K562 (cell line): ENCODE measurements at regions of chr7 and their contacts with region 1.

Region 1: GRCh38 chr7:130205084-130205947 is at the start of gene TMEM209:
- DNase-seq: peak; percentile 99 to 100 (median 100)
- ATAC-seq: peak; percentile 85
- H3K4me3 ChIP-seq: peak within 1 kb of the TSS; percentile 60
- H3K27ac ChIP-seq: peak within 1 kb of the TSS; percentile 95
- H3K4me1 ChIP-seq: peaks cover 24 to 49% of the 10 kb centered on the region in 2 experiments
- H3K27me3 ChIP-seq: no peaks in the 10 kb centered on the region
- CTCF ChIP-seq: peak in 1 of 3 experiments; percentile 53; a peak in 2 of 6 replicates
- EP300 ChIP-seq: peak; percentile 67
- POLR2A ChIP-seq: peak; percentile 99
- RAD21 ChIP-seq: no peak; a peak in 1 of 4 replicates
- polyA plus RNA-seq, gene TMEM209: 74.6 to 82.1 TPM

Region 2: GRCh38 chr7:130047821-130048220 is 157.5 kb before region 1 on chr7:
- CTCF ChIA-PET with region 1: no interaction called
- POLR2A ChIA-PET with region 1: no interaction called
- in situ Hi-C with region 1: no loop called
- intact Hi-C with region 1: no loop called
- DNase-seq: no peak
- ATAC-seq: no peak
- H3K4me3 ChIP-seq: no peak overlapping the region
- H3K27ac ChIP-seq: no peak overlapping the region
- H3K4me1 ChIP-seq: peaks cover 3 to 11% of the 10 kb centered on the region in 2 experiments; a peak in 3 of 5 replicates
- H3K27me3 ChIP-seq: no peaks in the 10 kb centered on the region
- CTCF ChIP-seq: no peak
- EP300 ChIP-seq: no peak
- POLR2A ChIP-seq: no peak
- RAD21 ChIP-seq: no peak

Region 3: DNA sequence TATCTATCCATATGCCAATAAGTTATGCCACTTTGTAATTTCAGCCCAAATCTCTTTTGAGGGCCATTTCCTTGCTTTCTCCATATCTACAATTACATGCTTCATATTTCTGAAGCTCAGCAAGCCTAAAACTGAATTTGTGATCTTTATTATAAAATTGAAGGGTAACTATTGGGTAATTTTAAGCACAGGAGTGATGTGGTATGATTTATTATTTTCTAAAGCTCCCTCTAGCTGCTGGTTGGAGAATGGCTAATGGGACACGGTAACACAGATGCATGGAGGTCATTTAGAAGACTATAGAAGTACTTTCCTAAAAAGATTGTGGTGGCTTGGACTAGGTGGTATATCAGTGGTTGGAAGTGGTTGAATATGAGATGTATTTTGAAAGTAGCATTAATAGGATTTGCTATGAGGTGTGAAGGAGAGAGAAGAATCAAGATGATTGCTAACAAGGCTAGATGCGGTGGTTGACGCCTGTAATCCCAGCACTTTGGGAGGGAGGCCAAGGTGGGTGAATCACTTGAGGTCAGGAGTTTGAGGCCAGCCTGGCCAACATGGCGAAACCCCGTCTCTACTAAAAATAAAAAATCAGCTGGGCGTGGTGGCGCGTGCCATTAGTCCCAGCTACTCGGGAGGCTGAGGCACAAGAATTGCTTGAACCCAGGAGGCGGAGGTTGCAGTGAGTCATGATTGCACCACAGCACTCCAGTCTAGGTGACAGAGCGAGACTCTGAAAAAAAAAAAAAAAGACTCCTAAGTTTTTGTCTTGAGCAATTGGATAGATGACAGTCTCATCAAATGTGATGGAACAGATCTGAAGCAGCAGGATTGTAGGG is 121.1 kb before region 1 on chr7:
- CTCF ChIA-PET with region 1: no interaction called
- POLR2A ChIA-PET with region 1: interaction called, 3 read pairs
- in situ Hi-C with region 1: no loop called
- intact Hi-C with region 1: loop called (anchors 5 kb)
- DNase-seq: peak in 3 of 4 experiments; percentile 41 to 50 (median 44)
- ATAC-seq: peak; percentile 81
- H3K4me3 ChIP-seq: no peak overlapping the region
- H3K27ac ChIP-seq: no peak overlapping the region
- H3K4me1 ChIP-seq: peaks cover 0 to 6% of the 10 kb centered on the region in 2 experiments; a peak in 2 of 5 replicates
- H3K27me3 ChIP-seq: no peaks in the 10 kb centered on the region
- CTCF ChIP-seq: peak; percentile 40 to 72 (median 70); a peak in 5 of 6 replicates
- EP300 ChIP-seq: no peak
- POLR2A ChIP-seq: no peak
- RAD21 ChIP-seq: no peak; a peak in 1 of 4 replicates

Region 4: DNA sequence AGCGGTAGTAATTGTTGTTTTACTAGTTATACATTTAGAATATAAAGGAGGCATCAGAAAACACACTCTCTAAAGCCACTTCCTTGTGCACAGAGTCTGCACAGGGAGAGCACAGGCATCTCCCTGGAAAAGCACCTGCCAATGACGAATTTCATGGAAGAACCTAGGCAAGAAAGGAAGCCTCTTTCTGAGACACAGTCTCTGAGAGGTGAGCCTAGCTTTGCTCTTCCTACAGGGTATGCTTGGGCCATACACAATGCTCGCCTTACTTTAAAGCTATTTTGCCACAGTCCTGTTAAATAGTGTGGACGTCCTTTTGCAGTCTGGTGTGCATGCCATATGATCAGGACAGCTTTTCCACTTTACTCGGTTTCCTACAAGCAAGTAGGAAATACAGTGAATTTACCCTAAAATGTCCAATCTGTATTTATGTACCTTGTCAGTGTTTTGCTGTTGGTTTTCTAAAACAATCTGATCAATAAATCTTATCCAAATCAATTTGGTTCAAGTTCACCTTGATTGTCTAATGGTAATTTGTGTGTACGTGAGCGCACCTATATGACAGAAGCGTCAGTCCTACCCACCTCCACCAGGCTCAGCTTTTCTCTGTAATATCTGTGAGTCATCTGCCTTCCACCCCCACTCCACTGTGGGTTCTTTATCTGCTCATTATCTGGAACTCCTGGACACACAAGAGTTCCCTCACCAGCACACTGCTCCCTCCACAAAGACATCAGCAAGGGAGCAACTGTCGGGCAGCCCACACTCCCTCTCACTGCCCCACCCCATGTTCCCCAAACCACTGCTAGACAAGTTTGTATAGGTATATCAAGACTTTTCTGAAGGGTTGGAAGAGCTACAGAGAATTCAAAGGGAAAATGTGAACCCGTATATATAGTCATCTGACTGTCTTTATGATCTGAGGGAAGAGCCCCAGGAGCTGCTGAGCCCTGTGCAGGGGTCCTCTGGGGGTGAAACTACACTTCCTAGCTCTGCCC is 69.8 kb before region 1 on chr7:
- CTCF ChIA-PET with region 1: no interaction called
- POLR2A ChIA-PET with region 1: interaction called, 8 read pairs
- in situ Hi-C with region 1: no loop called
- intact Hi-C with region 1: loop called (anchors 1 kb)
- DNase-seq: peak; percentile 92 to 98 (median 95)
- ATAC-seq: peak; percentile 87
- H3K4me3 ChIP-seq: no peak overlapping the region
- H3K27ac ChIP-seq: peak overlapping the region; percentile 89
- H3K4me1 ChIP-seq: peaks cover 38 to 73% of the 10 kb centered on the region in 2 experiments
- H3K27me3 ChIP-seq: no peaks in the 10 kb centered on the region
- CTCF ChIP-seq: 0 out of 6 replicates have a peak, but pooled peaks of 1 of the 3 experiments have one; percentile 5
- EP300 ChIP-seq: peak; percentile 98
- POLR2A ChIP-seq: no peak; the same call in 1 of the 2 replicates
- RAD21 ChIP-seq: peak; percentile 20 to 50; a peak in 3 of 4 replicates

Region 5: DNA sequence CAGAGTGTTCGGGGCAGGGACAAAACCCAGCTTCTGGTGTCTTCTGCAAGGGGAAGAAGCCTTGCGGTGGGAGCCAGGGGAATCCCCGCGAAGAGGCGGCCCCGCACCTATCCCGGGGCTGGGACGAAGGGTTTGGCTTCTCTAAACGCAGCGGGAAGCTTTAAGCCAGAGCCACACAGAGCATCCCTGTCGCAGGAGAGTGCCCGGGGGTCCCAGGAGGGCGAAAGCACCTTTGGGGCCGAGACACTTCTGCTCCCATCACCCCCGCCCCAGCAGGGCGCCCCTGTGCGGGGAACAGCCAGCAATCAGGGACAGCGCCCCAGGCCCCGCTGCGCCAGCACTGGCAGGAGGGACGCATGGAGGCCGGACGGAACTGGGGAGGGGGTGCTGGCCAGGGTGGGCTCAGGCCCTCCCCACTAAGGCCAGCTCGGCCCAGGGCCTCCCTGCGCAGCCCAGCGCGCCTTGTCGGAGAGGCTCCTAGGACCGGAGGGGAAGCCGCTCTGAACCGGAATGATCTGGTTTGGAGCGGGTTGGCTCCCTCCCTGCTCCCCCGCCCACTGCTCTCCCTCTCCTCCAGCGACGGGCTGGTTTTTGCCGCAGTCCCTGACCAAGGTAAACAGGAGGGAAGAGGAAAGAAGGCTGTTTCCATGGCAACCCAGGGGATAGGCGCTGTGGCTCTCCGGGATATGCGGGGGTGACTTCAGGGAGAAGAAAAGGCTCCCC is 64.0 kb before region 1 on chr7:
- CTCF ChIA-PET with region 1: no interaction called
- POLR2A ChIA-PET with region 1: interaction called, 10 read pairs
- in situ Hi-C with region 1: no loop called
- intact Hi-C with region 1: loop called (anchors 2 kb)
- DNase-seq: peak; percentile 81 to 87 (median 85)
- ATAC-seq: peak; percentile 80
- H3K4me3 ChIP-seq: 0 out of 2 replicates have a peak overlapping the region, but pooled peaks have one; percentile 3
- H3K27ac ChIP-seq: peak overlapping the region; percentile 66
- H3K4me1 ChIP-seq: peaks cover 43 to 47% of the 10 kb centered on the region in 2 experiments
- H3K27me3 ChIP-seq: no peaks in the 10 kb centered on the region
- CTCF ChIP-seq: no peak
- EP300 ChIP-seq: no peak; the same call in 1 of the 2 replicates
- POLR2A ChIP-seq: 0 out of 2 replicates have a peak, but pooled peaks have one; percentile 51
- RAD21 ChIP-seq: no peak

Region 6: GRCh38 chr7:130182990-130183389 is 22.3 kb before region 1 on chr7:
- CTCF ChIA-PET with region 1: interaction called, 3 read pairs
- POLR2A ChIA-PET with region 1: interaction called, 10 read pairs
- in situ Hi-C with region 1: no loop called
- intact Hi-C with region 1: no loop called
- DNase-seq: no peak
- ATAC-seq: no peak
- H3K4me3 ChIP-seq: no peak overlapping the region
- H3K27ac ChIP-seq: no peak overlapping the region
- H3K4me1 ChIP-seq: no peaks in the 10 kb centered on the region
- H3K27me3 ChIP-seq: no peaks in the 10 kb centered on the region
- CTCF ChIP-seq: no peak
- EP300 ChIP-seq: no peak
- POLR2A ChIP-seq: no peak
- RAD21 ChIP-seq: no peak

Region 7: DNA sequence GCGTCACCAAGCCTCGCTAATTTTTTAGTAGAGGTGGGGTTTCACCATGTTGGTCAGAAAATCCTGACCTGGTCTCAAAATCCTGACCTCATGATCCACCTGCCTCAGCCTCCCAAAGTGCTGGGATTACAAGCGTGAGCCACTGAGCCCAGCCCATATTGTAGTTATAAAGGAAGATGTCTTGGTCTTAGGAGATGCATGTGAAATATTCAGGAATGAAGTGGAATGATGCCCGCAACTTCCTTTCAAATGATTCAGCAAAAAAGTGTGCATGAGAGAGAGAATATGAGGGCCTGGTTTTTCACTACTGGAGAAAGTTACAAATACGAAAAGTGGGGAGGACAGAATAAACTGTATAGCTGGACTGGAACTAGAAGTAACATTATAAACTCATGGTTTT is 16.0 kb before region 1 on chr7:
- CTCF ChIA-PET with region 1: interaction called, 3 read pairs
- POLR2A ChIA-PET with region 1: interaction called, 47 read pairs
- in situ Hi-C with region 1: no loop called
- intact Hi-C with region 1: no loop called
- DNase-seq: no peak
- ATAC-seq: no peak
- H3K4me3 ChIP-seq: no peak overlapping the region
- H3K27ac ChIP-seq: no peak overlapping the region
- H3K4me1 ChIP-seq: no peaks in the 10 kb centered on the region; a peak in 1 of 5 replicates
- H3K27me3 ChIP-seq: no peaks in the 10 kb centered on the region
- CTCF ChIP-seq: no peak
- EP300 ChIP-seq: no peak
- POLR2A ChIP-seq: no peak
- RAD21 ChIP-seq: no peak

Region 8: GRCh38 chr7:130219871-130220270 is 14.6 kb after region 1 on chr7:
- CTCF ChIA-PET with region 1: no interaction called
- POLR2A ChIA-PET with region 1: interaction called, 14 read pairs
- in situ Hi-C with region 1: no loop called
- intact Hi-C with region 1: no loop called
- DNase-seq: no peak
- ATAC-seq: no peak
- H3K4me3 ChIP-seq: no peak overlapping the region
- H3K27ac ChIP-seq: no peak overlapping the region
- H3K4me1 ChIP-seq: peaks cover 7 to 14% of the 10 kb centered on the region in 2 experiments; a peak in 4 of 5 replicates
- H3K27me3 ChIP-seq: no peaks in the 10 kb centered on the region
- CTCF ChIP-seq: no peak
- EP300 ChIP-seq: no peak
- POLR2A ChIP-seq: no peak
- RAD21 ChIP-seq: no peak

Region 9: DNA sequence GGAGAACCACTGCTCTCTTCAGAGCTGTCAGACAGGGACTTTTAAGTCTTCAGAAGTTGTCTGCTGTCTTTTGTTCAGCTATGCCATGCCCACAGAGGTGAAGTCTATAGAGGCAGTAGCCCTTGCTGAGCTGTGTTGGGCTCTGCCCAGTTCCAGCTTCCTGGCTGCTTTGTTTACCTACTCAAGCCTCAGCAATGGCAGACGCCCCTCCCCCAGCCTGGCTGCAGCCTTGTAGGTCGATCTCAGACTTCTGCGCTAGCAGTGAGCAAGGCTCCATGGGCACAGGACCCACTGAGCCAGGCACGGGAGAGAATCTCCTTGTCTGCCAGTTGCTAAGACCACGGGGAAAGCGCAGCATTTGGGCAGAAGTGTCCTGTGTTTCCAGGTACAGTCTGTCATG is 49.2 kb after region 1 on chr7:
- CTCF ChIA-PET with region 1: no interaction called
- POLR2A ChIA-PET with region 1: no interaction called
- in situ Hi-C with region 1: no loop called
- intact Hi-C with region 1: no loop called
- DNase-seq: no peak
- ATAC-seq: no peak
- H3K4me3 ChIP-seq: no peak overlapping the region
- H3K27ac ChIP-seq: no peak overlapping the region
- H3K4me1 ChIP-seq: no peaks in the 10 kb centered on the region
- H3K27me3 ChIP-seq: no peaks in the 10 kb centered on the region; a peak in 1 of 5 replicates
- CTCF ChIP-seq: no peak
- EP300 ChIP-seq: no peak
- POLR2A ChIP-seq: no peak
- RAD21 ChIP-seq: no peak

Region 10: DNA sequence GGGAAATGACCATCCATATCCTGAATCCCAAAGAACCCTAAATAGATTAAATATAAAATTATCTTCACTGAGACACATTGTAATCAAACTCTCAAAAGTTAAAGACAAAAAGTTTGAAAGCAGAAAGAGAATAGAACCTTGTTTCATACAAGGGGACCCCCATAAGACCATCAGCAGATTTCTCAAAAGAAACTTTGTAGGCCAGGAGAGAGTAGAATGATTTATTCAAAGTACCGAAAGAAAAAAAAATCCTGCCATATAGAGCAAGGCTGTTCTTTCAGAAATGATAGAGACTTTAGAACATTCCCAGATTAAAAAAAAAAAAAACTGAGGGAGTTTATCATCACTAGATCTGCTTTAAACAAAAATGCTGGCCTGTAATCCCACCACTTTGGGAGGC is 563.5 kb after region 1 on chr7:
- CTCF ChIA-PET with region 1: no interaction called
- POLR2A ChIA-PET with region 1: no interaction called
- in situ Hi-C with region 1: no loop called
- intact Hi-C with region 1: no loop called
- DNase-seq: no peak
- ATAC-seq: no peak
- H3K4me3 ChIP-seq: no peak overlapping the region
- H3K27ac ChIP-seq: no peak overlapping the region
- H3K4me1 ChIP-seq: no peaks in the 10 kb centered on the region
- H3K27me3 ChIP-seq: no peaks in the 10 kb centered on the region
- CTCF ChIP-seq: no peak
- EP300 ChIP-seq: no peak
- POLR2A ChIP-seq: no peak
- RAD21 ChIP-seq: no peak